CD4-positive, alpha-beta memory T cell (primary cell): ENCODE measurements at regions of chr17 and their contacts with region 1.

Region 1: DNA sequence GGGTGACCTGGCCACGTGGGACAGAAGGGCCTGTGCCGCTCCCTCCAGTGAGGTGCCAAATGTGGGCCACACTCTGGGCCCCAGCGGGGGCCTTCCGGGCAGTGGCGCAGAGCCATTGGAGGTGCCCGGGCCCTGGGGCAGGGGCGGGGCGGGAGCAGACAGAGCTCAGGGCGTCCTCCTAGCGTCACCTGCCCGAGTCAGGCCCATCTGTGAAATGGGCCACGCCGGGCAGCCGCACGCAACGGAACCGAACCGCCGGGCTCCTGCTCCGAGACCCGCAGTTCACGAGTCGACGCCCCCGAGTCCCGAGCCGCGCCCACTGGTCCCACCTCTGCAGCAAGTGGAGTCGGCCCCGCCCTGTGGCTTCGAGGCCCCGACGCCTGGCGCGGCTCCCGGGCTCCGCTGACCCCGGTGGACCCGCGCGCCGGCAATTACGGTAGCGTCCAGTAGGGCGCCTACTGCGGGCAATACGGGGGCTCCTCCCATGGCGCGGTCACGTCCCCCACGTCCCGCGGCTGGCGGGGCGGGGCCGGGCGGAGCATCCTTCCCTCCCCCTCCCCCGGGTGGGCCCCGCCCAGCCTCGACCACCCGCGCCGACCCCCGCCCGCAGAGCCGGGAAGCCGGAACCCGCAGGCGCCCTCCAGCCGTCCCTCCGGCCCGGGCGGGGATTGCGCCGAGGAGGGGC is 1.9 kb downstream of the SLC16A3 start:
- DNase-seq: peak; percentile 42 to 76 (median 48)
- H3K4me3 ChIP-seq: peak overlapping the region in 1 of 2 donors; percentile 32
- H3K4me3 Mint-ChIP-seq: peak overlapping the region in 5 of 8 donors; percentile 17 to 84 (median 77)
- H3K27ac ChIP-seq: peak overlapping the region; percentile 38
- H3K27ac Mint-ChIP-seq: no peak overlapping the region
- H3K4me1 ChIP-seq: peaks cover 42% of the 10 kb centered on the region
- H3K4me1 Mint-ChIP-seq: peaks cover 2 to 37% (median 15%) of the 10 kb centered on the region in 4 donors
- H3K27me3 ChIP-seq: no peaks in the 10 kb centered on the region
- H3K27me3 Mint-ChIP-seq: no peaks in the 10 kb centered on the region

Region 2: GRCh38 chr17:82205719-82206508 is 24.9 kb before region 1 on chr17:
- CTCF ChIA-PET with region 1: interaction called, 14 read pairs
- POLR2A ChIA-PET with region 1: interaction called, 35 read pairs
- intact Hi-C with region 1: loop called (anchors 2 kb)
- DNase-seq: peak; percentile 84 to 87 (median 86)
- H3K4me3 ChIP-seq: no peak overlapping the region
- H3K4me3 Mint-ChIP-seq: peak overlapping the region in 7 of 8 donors; percentile 39 to 81 (median 54)
- H3K27ac ChIP-seq: peak overlapping the region; percentile 61
- H3K27ac Mint-ChIP-seq: peak overlapping the region; percentile 96 to 99 (median 97)
- H3K4me1 ChIP-seq: peaks cover 26% of the 10 kb centered on the region
- H3K4me1 Mint-ChIP-seq: peaks cover 20 to 46% (median 33%) of the 10 kb centered on the region in 4 donors
- H3K27me3 ChIP-seq: no peaks in the 10 kb centered on the region
- H3K27me3 Mint-ChIP-seq: no peaks in the 10 kb centered on the region

Region 3: GRCh38 chr17:82212331-82213250 is 18.2 kb before region 1 on chr17 and contains the start of gene CCDC57:
- CTCF ChIA-PET with region 1: interaction called, 10 read pairs
- POLR2A ChIA-PET with region 1: interaction called, 22 read pairs
- intact Hi-C with region 1: loop called (anchors 2 kb)
- DNase-seq: peak in 4 of 5 donors; percentile 33 to 55 (median 44)
- H3K4me3 ChIP-seq: peak within 1 kb of the TSS; percentile 3 to 64
- H3K4me3 Mint-ChIP-seq: peak within 1 kb of the TSS; percentile 85 to 94 (median 88)
- H3K27ac ChIP-seq: peak within 1 kb of the TSS; percentile 58
- H3K27ac Mint-ChIP-seq: peak within 1 kb of the TSS; percentile 8 to 98 (median 91)
- H3K4me1 ChIP-seq: peaks cover 49% of the 10 kb centered on the region
- H3K4me1 Mint-ChIP-seq: peaks cover 12 to 40% (median 29%) of the 10 kb centered on the region in 4 donors
- H3K27me3 ChIP-seq: no peaks in the 10 kb centered on the region
- H3K27me3 Mint-ChIP-seq: no peaks in the 10 kb centered on the region
- total RNA-seq, gene CCDC57: 80.5 to 88.7 TPM